ENCODE measurements at regions of chr12 and their contacts with region 1.

Region 1: DNA sequence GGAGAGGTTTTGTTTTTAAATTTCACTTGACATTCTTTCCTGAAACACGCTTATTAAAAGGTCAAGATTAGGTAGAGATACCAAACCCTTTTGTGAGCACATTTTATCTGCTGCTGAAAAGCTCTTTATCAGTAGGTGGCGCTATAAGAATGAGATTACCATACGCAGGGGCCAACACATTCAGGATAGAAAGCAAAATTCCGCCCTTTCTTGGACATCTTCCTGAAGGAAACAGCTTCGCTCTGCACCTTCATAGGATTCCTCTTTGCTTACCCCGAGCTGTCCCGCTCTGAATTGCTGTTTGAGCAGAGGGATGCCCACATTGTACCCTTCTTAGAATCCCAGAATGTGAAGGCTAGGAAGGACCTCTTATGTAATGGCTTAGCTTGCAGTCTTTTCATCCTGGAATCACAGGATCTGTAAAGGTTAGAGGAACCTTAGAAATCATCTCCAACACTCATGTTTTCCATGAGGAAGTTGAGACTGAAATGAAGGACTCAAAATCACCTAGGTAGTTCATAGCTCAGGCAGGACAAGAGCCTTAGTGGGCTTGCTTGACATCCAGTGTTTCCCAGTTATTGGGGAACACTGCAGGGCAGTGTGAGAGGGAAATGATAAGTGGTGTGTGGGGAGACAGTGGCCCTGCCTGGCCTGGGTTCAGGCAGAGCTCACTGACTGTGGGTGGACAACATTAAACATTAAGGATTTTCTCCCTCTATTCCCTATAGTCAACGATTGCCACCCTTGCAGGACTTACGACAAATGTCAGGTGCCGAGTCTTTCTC is 38.7 kb upstream of the CRY1 start:
- DNase-seq: peak; percentile 51
- H3K4me3 ChIP-seq: no peak overlapping the region
- H3K27ac ChIP-seq: no peak overlapping the region
- H3K27me3 ChIP-seq: no peaks in the 10 kb centered on the region
- CTCF ChIP-seq: peak; percentile 89

Region 2: GRCh38 chr12:106369607-106370346 is 762.2 kb before region 1 on chr12:
- CTCF ChIA-PET with region 1: no interaction called
- POLR2A ChIA-PET with region 1: no interaction called
- DNase-seq: peak; percentile 55
- H3K4me3 ChIP-seq: no peak overlapping the region
- H3K27ac ChIP-seq: peak overlapping the region; percentile 41
- H3K27me3 ChIP-seq: no peaks in the 10 kb centered on the region
- CTCF ChIP-seq: no peak

Region 3: GRCh38 chr12:106919910-106920544 is 212.0 kb before region 1 on chr12:
- CTCF ChIA-PET with region 1: no interaction called
- POLR2A ChIA-PET with region 1: no interaction called
- DNase-seq: peak; percentile 16
- H3K4me3 ChIP-seq: no peak overlapping the region
- H3K27ac ChIP-seq: no peak overlapping the region
- H3K27me3 ChIP-seq: peaks cover 7% of the 10 kb centered on the region
- CTCF ChIP-seq: peak; percentile 68

Region 4: DNA sequence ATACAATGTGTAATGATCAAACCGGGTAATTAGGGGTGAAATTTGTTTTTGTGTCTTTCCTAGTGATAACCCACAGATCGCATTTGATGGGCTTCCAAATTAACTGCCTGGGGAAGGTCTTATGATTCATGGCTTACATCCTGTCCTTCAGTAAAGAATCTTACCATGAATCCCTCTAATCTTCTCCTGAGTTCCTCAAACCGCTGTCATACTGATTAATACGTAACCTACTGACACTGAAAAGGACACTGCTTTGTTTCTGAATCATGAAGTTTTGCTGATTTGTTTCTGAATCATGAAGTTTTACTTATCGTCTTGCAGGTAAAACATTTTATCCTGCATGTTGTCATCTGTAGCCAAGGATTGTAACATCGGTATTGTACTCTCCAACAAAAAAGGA is 13.4 kb after region 1 on chr12:
- CTCF ChIA-PET with region 1: interaction called, 31 read pairs
- POLR2A ChIA-PET with region 1: no interaction called
- DNase-seq: no peak
- H3K4me3 ChIP-seq: no peak overlapping the region
- H3K27ac ChIP-seq: no peak overlapping the region
- H3K27me3 ChIP-seq: no peaks in the 10 kb centered on the region
- CTCF ChIP-seq: no peak

Region 5: GRCh38 chr12:107320033-107320928 is 188.3 kb after region 1 on chr12:
- CTCF ChIA-PET with region 1: interaction called, 16 read pairs
- POLR2A ChIA-PET with region 1: interaction called, 3 read pairs
- DNase-seq: no peak
- H3K4me3 ChIP-seq: peak overlapping the region; percentile 67
- H3K27ac ChIP-seq: no peak overlapping the region
- H3K27me3 ChIP-seq: peaks cover 13% of the 10 kb centered on the region
- CTCF ChIP-seq: no peak

Region 6: DNA sequence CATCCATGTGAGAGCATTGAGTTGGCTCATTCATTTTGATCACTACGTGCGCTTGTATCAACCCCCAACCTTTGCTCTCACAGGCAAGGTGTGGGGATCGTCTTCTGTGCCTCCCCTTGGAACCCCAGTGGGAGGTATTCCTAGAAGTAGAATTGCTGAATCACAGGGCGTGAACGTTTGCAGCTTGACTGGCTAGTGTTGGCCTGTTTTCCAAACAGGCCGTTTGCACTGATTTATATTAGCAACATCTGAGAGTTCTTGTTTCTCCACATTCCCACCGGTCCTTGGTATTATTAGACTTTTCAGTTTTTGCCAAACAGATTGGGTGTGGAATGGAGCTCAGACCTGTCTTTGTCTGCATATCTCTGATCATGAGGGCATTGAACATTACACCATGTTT is 265.0 kb after region 1 on chr12:
- CTCF ChIA-PET with region 1: interaction called, 149 read pairs
- POLR2A ChIA-PET with region 1: no interaction called
- DNase-seq: no peak
- H3K4me3 ChIP-seq: no peak overlapping the region
- H3K27ac ChIP-seq: no peak overlapping the region
- H3K27me3 ChIP-seq: no peaks in the 10 kb centered on the region
- CTCF ChIP-seq: no peak

Region 7: GRCh38 chr12:107600581-107601144 is 468.6 kb after region 1 on chr12:
- CTCF ChIA-PET with region 1: interaction called, 401 read pairs
- POLR2A ChIA-PET with region 1: no interaction called
- DNase-seq: no peak
- H3K4me3 ChIP-seq: no peak overlapping the region
- H3K27ac ChIP-seq: no peak overlapping the region
- H3K27me3 ChIP-seq: no peaks in the 10 kb centered on the region
- CTCF ChIP-seq: no peak

Region 8: GRCh38 chr12:107635139-107635538 is 503.1 kb after region 1 on chr12:
- CTCF ChIA-PET with region 1: interaction called, 10 read pairs
- POLR2A ChIA-PET with region 1: no interaction called
- DNase-seq: no peak
- H3K4me3 ChIP-seq: no peak overlapping the region
- H3K27ac ChIP-seq: no peak overlapping the region
- H3K27me3 ChIP-seq: no peaks in the 10 kb centered on the region
- CTCF ChIP-seq: no peak

Region 9: GRCh38 chr12:107948391-107948945 is 816.4 kb after region 1 on chr12:
- CTCF ChIA-PET with region 1: no interaction called
- POLR2A ChIA-PET with region 1: no interaction called
- DNase-seq: no peak
- H3K4me3 ChIP-seq: no peak overlapping the region
- H3K27ac ChIP-seq: no peak overlapping the region
- H3K27me3 ChIP-seq: no peaks in the 10 kb centered on the region
- CTCF ChIP-seq: no peak